ENCODE measurements at regions of chr22 and their contacts with region 1.

Region 1: GRCh38 chr22:33400061-33400840 is 342.1 kb upstream of the SYN3 start:
- DNase-seq: no peak
- H3K4me3 Mint-ChIP-seq: no peak overlapping the region
- H3K27ac Mint-ChIP-seq: no peak overlapping the region
- H3K4me1 Mint-ChIP-seq: no peaks in the 10 kb centered on the region
- H3K27me3 Mint-ChIP-seq: no peaks in the 10 kb centered on the region
- CTCF ChIP-seq: no peak

Region 2: GRCh38 chr22:33438273-33438672 is 38.0 kb after region 1 on chr22:
- CTCF ChIA-PET with region 1: no interaction called
- intact Hi-C with region 1: no loop called
- DNase-seq: peak; percentile 21
- H3K4me3 Mint-ChIP-seq: no peak overlapping the region
- H3K27ac Mint-ChIP-seq: peak overlapping the region; percentile 30
- H3K4me1 Mint-ChIP-seq: peaks cover 17% of the 10 kb centered on the region
- H3K27me3 Mint-ChIP-seq: no peaks in the 10 kb centered on the region
- CTCF ChIP-seq: no peak

Region 3: GRCh38 chr22:33528183-33528582 is 127.9 kb after region 1 on chr22:
- CTCF ChIA-PET with region 1: interaction called, 16 read pairs
- intact Hi-C with region 1: no loop called
- DNase-seq: no peak
- H3K4me3 Mint-ChIP-seq: no peak overlapping the region
- H3K27ac Mint-ChIP-seq: no peak overlapping the region
- H3K4me1 Mint-ChIP-seq: peaks cover 20% of the 10 kb centered on the region
- H3K27me3 Mint-ChIP-seq: no peaks in the 10 kb centered on the region
- CTCF ChIP-seq: no peak